ENCODE measurements at regions of chr6 and their contacts with region 1.

Region 1: GRCh38 chr6:133916650-133917151 is 27.8 kb downstream of the TCF21 start:
- H3K4me3 ChIP-seq: no peak overlapping the region
- H3K27ac ChIP-seq: no peak overlapping the region
- H3K4me1 ChIP-seq: peaks cover 4% of the 10 kb centered on the region
- CTCF ChIP-seq: peak; percentile 88

Region 2: GRCh38 chr6:133837801-133838349 is 78.8 kb before region 1 on chr6:
- CTCF ChIA-PET with region 1: interaction called, 117 read pairs
- POLR2A ChIA-PET with region 1: interaction called, 4 read pairs
- H3K4me3 ChIP-seq: peak overlapping the region; percentile 57
- H3K27ac ChIP-seq: peak overlapping the region; percentile 36; the same call in 1 of the 2 replicates
- H3K4me1 ChIP-seq: no peaks in the 10 kb centered on the region
- CTCF ChIP-seq: peak; percentile 96

Region 3: GRCh38 chr6:133854364-133855275 is 62.1 kb before region 1 on chr6:
- CTCF ChIA-PET with region 1: interaction called, 26 read pairs
- POLR2A ChIA-PET with region 1: no interaction called
- H3K4me3 ChIP-seq: peak overlapping the region; percentile 47
- H3K27ac ChIP-seq: no peak overlapping the region
- H3K4me1 ChIP-seq: no peaks in the 10 kb centered on the region
- CTCF ChIP-seq: peak; percentile 96

Region 4: GRCh38 chr6:133887156-133887879 is 29.4 kb before region 1 on chr6:
- CTCF ChIA-PET with region 1: interaction called, 23 read pairs
- POLR2A ChIA-PET with region 1: no interaction called
- H3K4me3 ChIP-seq: no peak overlapping the region
- H3K27ac ChIP-seq: peak overlapping the region; percentile 63
- H3K4me1 ChIP-seq: peaks cover 27% of the 10 kb centered on the region
- CTCF ChIP-seq: no peak

Region 5: DNA sequence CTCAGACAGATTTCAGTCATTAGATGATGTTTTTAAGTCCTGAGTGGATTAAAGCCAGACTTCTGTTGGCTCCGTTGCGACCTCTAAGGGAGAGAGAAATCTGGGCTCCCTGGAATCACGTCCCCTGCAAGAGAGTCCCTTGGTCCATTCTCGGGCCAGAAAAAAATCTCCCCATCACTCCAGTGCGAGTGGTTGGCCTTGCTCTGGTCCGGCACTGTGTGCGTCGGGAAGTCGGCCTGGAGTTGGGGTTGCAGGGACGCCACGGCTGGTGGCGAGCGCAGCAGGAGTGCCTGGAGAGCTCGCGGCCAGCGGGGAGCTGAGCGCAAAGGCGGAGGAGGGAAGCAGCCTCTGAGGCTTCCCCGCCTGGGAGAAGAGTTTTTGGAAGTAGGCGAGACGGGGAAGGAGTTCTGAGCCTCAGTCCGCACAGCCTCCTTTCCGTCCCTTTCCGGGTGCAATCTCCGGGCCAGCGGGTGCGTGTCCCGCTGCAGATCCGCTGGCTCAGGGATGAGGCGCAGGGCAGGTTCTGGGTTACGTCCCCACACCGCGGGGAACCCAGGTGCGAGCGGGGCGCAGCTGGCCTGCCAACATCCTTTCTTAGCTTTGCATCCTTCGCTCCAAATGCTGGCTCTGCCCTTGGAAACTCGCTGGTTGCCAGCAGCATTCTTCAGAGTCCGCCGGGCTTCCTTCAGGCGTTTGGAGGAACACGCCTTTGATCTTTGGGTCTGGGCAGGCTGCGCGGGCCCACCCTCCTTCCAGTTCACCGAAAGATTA is 20.9 kb before region 1 on chr6:
- CTCF ChIA-PET with region 1: interaction called, 10 read pairs
- POLR2A ChIA-PET with region 1: no interaction called
- H3K4me3 ChIP-seq: peak overlapping the region; percentile 15
- H3K27ac ChIP-seq: no peak overlapping the region
- H3K4me1 ChIP-seq: peaks cover 12% of the 10 kb centered on the region
- CTCF ChIP-seq: no peak

Region 6: DNA sequence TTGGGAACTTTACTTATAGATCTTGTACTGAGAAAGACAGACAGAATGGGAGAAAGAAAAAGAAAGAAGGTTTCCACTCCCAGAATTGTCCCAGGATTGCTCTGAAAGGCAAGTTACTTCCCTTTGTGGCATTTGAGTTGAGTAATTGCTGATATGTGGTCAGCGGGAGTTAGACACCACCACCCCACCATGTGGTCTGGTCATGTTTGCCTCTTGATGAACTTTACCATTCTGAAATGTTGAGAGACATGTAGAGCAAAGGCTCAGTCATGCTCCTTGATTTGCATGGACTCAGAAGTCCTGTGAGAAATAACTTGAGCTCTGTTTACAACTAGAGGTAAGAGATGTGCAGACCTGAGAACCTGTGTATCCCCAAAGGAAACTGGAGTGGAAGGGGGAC is 10.7 kb before region 1 on chr6:
- CTCF ChIA-PET with region 1: interaction called, 21 read pairs
- POLR2A ChIA-PET with region 1: no interaction called
- H3K4me3 ChIP-seq: no peak overlapping the region
- H3K27ac ChIP-seq: no peak overlapping the region
- H3K4me1 ChIP-seq: no peaks in the 10 kb centered on the region
- CTCF ChIP-seq: no peak

Region 7: GRCh38 chr6:134077301-134077700 is 160.6 kb after region 1 on chr6:
- CTCF ChIA-PET with region 1: no interaction called
- POLR2A ChIA-PET with region 1: no interaction called
- H3K4me3 ChIP-seq: no peak overlapping the region
- H3K27ac ChIP-seq: no peak overlapping the region
- H3K4me1 ChIP-seq: peaks cover 11% of the 10 kb centered on the region; the same call in 1 of the 2 replicates
- CTCF ChIP-seq: no peak

Measured in HEK293 (cell line).